Right ventricle myocardium superior (tissue), 1 donor: ENCODE measurements at regions of chr14 and their contacts with region 1.

Region 1: DNA sequence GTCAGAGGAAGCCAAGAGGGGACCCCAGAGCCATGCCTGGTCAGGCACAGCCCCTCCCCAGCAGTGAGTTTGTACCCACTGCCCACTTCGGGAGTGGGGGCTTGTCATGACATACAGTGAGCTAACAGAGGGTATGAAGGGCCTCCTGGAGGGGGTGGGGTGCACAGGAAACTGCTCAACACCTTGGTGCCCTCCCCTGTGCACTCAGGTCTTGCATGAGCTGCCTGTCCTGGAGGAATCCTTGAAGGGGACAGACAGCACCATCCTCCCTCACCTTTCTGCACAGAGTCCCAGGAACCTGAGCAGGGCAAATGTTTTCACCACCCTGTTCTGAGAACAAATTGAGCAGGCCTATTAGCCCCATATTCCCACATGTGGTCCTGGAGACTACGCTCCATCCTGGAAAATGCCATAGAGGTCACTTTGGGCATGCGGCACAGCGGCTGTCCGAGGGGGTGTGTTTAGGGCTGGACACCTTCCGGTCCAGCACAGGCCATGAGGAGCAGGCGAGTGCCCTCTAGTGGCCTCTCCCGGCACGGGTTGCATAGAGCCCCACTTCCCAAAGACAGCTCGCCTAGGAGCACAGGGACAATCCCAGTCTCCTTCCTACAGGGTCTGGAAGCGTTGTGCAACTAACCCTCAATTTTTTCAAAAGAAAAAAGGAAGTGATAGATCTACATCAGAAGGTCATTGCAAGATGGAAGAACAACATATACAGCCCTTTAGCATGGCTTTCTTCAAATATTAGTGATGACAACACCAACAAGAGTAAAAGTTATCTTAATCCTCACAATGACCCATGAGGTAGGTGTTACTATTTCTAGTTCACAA is 31.9 kb upstream of the ZFP36L1 start:
- DNase-seq: peak; percentile 94
- ATAC-seq: peak; percentile 95

Region 2: GRCh38 chr14:67837011-67837624 is 987.6 kb before region 1 on chr14:
- intact Hi-C with region 1: loop called (anchors 10 kb)
- DNase-seq: no peak
- ATAC-seq: no peak

Region 3: GRCh38 chr14:67934862-67935261 is 889.9 kb before region 1 on chr14:
- intact Hi-C with region 1: loop called (anchors 5 kb)
- DNase-seq: no peak
- ATAC-seq: no peak